Breast epithelium (tissue), 4 donors: ENCODE measurements at regions of chr10 and their contacts with region 1.

Region 1: DNA sequence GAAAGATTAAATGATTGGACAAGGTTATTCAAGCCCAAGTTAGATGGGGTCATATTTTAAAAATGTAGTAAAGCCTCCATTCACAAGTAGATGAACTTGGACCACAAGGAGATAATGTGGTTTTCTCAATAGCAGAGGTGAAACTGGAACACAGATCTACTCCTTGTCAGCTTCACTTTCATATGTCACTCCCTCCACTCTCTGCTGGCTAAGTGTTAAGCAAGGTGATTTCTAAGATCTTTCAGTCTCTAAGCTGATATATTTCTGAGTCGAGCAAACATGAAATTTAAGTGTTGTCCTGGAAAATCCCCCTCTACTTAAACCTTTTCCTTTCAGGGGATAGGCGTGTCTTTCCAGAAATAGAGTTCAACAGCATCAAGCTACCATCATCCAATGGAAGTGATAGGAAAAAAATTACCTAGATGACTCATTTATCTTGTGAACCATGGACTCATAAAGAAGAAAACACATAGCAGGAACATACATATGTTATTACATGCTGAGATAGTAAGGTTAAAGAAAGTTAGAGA is 275.0 kb downstream of the PTEN start:
- DNase-seq: no peak
- H3K4me3 ChIP-seq: no peak overlapping the region
- H3K27ac ChIP-seq: no peak overlapping the region
- H3K4me1 ChIP-seq: no peaks in the 10 kb centered on the region
- H3K27me3 ChIP-seq: no peaks in the 10 kb centered on the region
- CTCF ChIP-seq: no peak
- POLR2A ChIP-seq: no peak

Region 2: GRCh38 chr10:88092973-88093372 is 45.4 kb before region 1 on chr10:
- intact Hi-C with region 1: loop called (anchors 2 kb)
- DNase-seq: no peak
- H3K4me3 ChIP-seq: no peak overlapping the region
- H3K27ac ChIP-seq: no peak overlapping the region
- H3K4me1 ChIP-seq: no peaks in the 10 kb centered on the region
- H3K27me3 ChIP-seq: no peaks in the 10 kb centered on the region
- CTCF ChIP-seq: no peak
- POLR2A ChIP-seq: no peak